Panc1 (cell line): ENCODE measurements at regions of chr10 and their contacts with region 1.

Region 1: GRCh38 chr10:110311357-110311949 is 6.7 kb upstream of the SMNDC1 start:
- DNase-seq: peak; percentile 65
- ATAC-seq: peak; percentile 86
- H3K4me3 ChIP-seq: no peak overlapping the region
- H3K27ac ChIP-seq: peak overlapping the region; percentile 45; the same call in 1 of the 2 replicates
- H3K4me1 ChIP-seq: no peaks in the 10 kb centered on the region; the same call in 1 of the 2 replicates
- H3K27me3 ChIP-seq: no peaks in the 10 kb centered on the region
- CTCF ChIP-seq: peak; percentile 83

Region 2: DNA sequence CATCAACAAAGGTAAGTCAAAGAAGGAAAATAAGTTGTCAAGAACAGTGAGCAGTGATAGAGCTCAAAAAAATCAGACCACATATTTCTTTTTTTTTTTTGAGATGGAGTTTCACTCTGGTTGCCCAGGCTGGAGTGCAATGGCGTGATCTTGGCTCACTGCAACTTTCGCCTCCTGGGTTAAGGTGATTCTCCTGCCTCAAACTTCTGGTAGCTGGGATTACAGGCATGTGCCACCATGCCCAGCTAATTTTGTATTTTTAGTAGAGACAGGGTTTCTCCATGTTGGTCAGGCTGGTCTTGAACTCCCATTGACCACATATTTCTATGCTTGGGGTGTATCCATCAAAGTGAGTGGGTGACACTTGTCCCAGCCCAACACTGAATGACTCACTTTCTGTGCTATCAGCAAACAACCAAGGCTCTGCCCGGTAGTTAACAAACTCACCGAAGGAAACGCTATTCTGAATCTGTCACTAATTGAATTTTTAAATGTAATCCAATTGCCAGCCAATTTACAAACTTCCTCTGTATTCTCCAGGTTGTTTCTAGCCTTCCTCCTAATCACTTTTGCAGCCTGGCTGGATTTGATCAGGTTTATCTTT is 12.8 kb after region 1 on chr10:
- CTCF ChIA-PET with region 1: no interaction called
- POLR2A ChIA-PET with region 1: interaction called, 11 read pairs
- in situ Hi-C with region 1: no loop called
- intact Hi-C with region 1: no loop called
- DNase-seq: no peak
- ATAC-seq: no peak
- H3K4me3 ChIP-seq: no peak overlapping the region
- H3K27ac ChIP-seq: no peak overlapping the region
- H3K4me1 ChIP-seq: no peaks in the 10 kb centered on the region
- H3K27me3 ChIP-seq: no peaks in the 10 kb centered on the region
- CTCF ChIP-seq: no peak

Region 3: GRCh38 chr10:110344622-110345021 is 33.2 kb after region 1 on chr10:
- CTCF ChIA-PET with region 1: no interaction called
- POLR2A ChIA-PET with region 1: no interaction called
- in situ Hi-C with region 1: no loop called
- intact Hi-C with region 1: no loop called
- DNase-seq: no peak
- ATAC-seq: no peak
- H3K4me3 ChIP-seq: no peak overlapping the region
- H3K27ac ChIP-seq: no peak overlapping the region
- H3K4me1 ChIP-seq: no peaks in the 10 kb centered on the region
- H3K27me3 ChIP-seq: no peaks in the 10 kb centered on the region
- CTCF ChIP-seq: no peak

Region 4: DNA sequence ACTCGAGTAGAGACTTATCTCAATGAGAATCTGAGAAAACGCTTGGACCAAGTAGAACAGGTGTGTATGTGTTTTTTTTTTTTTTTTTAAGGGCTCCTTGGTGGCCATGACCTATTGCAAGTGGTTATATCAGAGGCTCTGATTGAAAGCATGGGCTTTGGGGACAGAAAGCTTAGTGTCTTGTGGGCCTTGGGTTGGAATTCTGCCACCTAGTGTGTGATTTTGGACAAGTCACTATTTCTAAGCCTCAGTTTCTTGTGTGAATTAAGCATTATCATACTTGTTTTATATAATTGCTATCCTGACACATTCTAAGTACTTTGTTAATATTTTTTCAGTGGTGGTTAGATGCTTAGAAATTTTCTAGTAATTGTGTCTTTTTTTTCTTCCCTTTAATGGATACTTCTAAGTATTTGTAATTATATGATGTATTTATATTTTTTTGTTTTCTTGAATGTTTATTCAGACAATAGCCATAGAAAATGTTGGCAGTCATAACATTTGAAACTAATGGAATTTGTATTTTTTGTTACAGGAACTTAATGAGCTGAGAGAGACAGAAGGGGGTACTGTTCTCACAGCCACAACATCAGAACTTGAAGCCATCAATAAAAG is 289.1 kb after region 1 on chr10:
- CTCF ChIA-PET with region 1: no interaction called
- POLR2A ChIA-PET with region 1: no interaction called
- in situ Hi-C with region 1: no loop called
- intact Hi-C with region 1: loop called (anchors 2 kb)
- DNase-seq: peak; percentile 57
- ATAC-seq: peak; percentile 87
- H3K4me3 ChIP-seq: no peak overlapping the region
- H3K27ac ChIP-seq: no peak overlapping the region
- H3K4me1 ChIP-seq: no peaks in the 10 kb centered on the region
- H3K27me3 ChIP-seq: no peaks in the 10 kb centered on the region
- CTCF ChIP-seq: peak; percentile 81